BJ (cell line): ENCODE measurements at regions of chr17 and their contacts with region 1.

Region 1: GRCh38 chr17:39699818-39700147 is at the start of gene ERBB2:
- DNase-seq: peak; percentile 33
- H3K4me3 ChIP-seq: peak within 1 kb of the TSS; percentile 84
- H3K27me3 ChIP-seq: no peaks in the 10 kb centered on the region
- CTCF ChIP-seq: no peak
- polyA plus RNA-seq, gene ERBB2: 22.8 and 35.4 TPM in 2 replicates

Region 2: GRCh38 chr17:39687811-39688518 is 11.8 kb before region 1 on chr17 and contains the start of gene PGAP3:
- CTCF ChIA-PET with region 1: interaction called, 9 read pairs
- POLR2A ChIA-PET with region 1: interaction called, 16 read pairs
- DNase-seq: peak; percentile 67
- H3K4me3 ChIP-seq: peak within 1 kb of the TSS; percentile 72
- H3K27me3 ChIP-seq: no peaks in the 10 kb centered on the region
- CTCF ChIP-seq: no peak
- polyA plus RNA-seq, gene PGAP3: 11.4 and 20.3 TPM in 2 replicates

Region 3: GRCh38 chr17:39894681-39895376 is 195.0 kb after region 1 on chr17:
- CTCF ChIA-PET with region 1: no interaction called
- POLR2A ChIA-PET with region 1: no interaction called
- DNase-seq: no peak
- H3K4me3 ChIP-seq: no peak overlapping the region
- H3K27me3 ChIP-seq: peaks cover 4% of the 10 kb centered on the region
- CTCF ChIP-seq: no peak